Posterior cingulate gyrus (tissue), 11 donors: ENCODE measurements at regions of chr18 and their contacts with region 1.

Region 1: GRCh38 chr18:61502472-61502871 is 169.2 kb downstream of the CDH20 start:
- DNase-seq: peak in 6 of 10 donors; percentile 20 to 62 (median 48)

Region 2: GRCh38 chr18:60684843-60685513 is 817.5 kb before region 1 on chr18:
- intact Hi-C with region 1: loop called (anchors 1 kb)
- DNase-seq: peak in 2 of 10 donors; percentile 43 to 62

Region 3: GRCh38 chr18:61085761-61086160 is 416.7 kb before region 1 on chr18:
- intact Hi-C with region 1: loop called (anchors 5 kb)
- DNase-seq: no peak

Region 4: GRCh38 chr18:61322265-61322873 is 180.1 kb before region 1 on chr18:
- intact Hi-C with region 1: loop called (anchors 1 kb)
- DNase-seq: peak; percentile 37 to 96 (median 83)